Posterior vena cava (tissue), 2 donors: ENCODE measurements at regions of chr17 and their contacts with region 1.

Region 1: GRCh38 chr17:43658900-43659299 is 2.8 kb downstream of the MEOX1 start:
- DNase-seq: no peak

Region 2: GRCh38 chr17:43126911-43127290 is 532.0 kb before region 1 on chr17:
- intact Hi-C with region 1: no loop called
- DNase-seq: no peak

Region 3: GRCh38 chr17:43645765-43646481 is 13.0 kb before region 1 on chr17:
- intact Hi-C with region 1: loop called in 1 of 2 experiments (anchors 1 kb)
- DNase-seq: peak; percentile 97